CD4-positive, alpha-beta T cell (primary cell): ENCODE measurements at regions of chr12 and their contacts with region 1.

Region 1: GRCh38 chr12:96219698-96220206 is 25.6 kb downstream of the ELK3 start:
- DNase-seq: peak in 2 of 14 experiments; percentile 24 to 45
- ATAC-seq: no peak
- H3K4me3 ChIP-seq: no peak overlapping the region
- H3K4me3 Mint-ChIP-seq: no peak overlapping the region
- H3K27ac ChIP-seq: no peak overlapping the region
- H3K27ac Mint-ChIP-seq: peak overlapping the region; percentile 33
- H3K4me1 ChIP-seq: peaks cover 32% of the 10 kb centered on the region
- H3K4me1 Mint-ChIP-seq: peaks cover 52% of the 10 kb centered on the region
- H3K27me3 ChIP-seq: no peaks in the 10 kb centered on the region
- H3K27me3 Mint-ChIP-seq: no peaks in the 10 kb centered on the region
- CTCF ChIP-seq: no peak

Region 2: GRCh38 chr12:95700316-95700785 is 519.4 kb before region 1 on chr12:
- CTCF ChIA-PET with region 1: no interaction called
- POLR2A ChIA-PET with region 1: no interaction called
- intact Hi-C with region 1: no loop called
- DNase-seq: no peak
- ATAC-seq: no peak
- H3K4me3 ChIP-seq: no peak overlapping the region
- H3K4me3 Mint-ChIP-seq: no peak overlapping the region
- H3K27ac ChIP-seq: no peak overlapping the region
- H3K27ac Mint-ChIP-seq: no peak overlapping the region
- H3K4me1 ChIP-seq: no peaks in the 10 kb centered on the region
- H3K4me1 Mint-ChIP-seq: no peaks in the 10 kb centered on the region
- H3K27me3 ChIP-seq: no peaks in the 10 kb centered on the region
- H3K27me3 Mint-ChIP-seq: peaks cover 9% of the 10 kb centered on the region
- CTCF ChIP-seq: no peak

Region 3: GRCh38 chr12:96061864-96062453 is 157.8 kb before region 1 on chr12:
- CTCF ChIA-PET with region 1: interaction called, 29 read pairs
- POLR2A ChIA-PET with region 1: interaction called, 6 read pairs
- intact Hi-C with region 1: loop called (anchors 1 kb)
- DNase-seq: peak; percentile 64 to 90 (median 70)
- ATAC-seq: peak; percentile 90
- H3K4me3 ChIP-seq: no peak overlapping the region
- H3K4me3 Mint-ChIP-seq: no peak overlapping the region
- H3K27ac ChIP-seq: no peak overlapping the region
- H3K27ac Mint-ChIP-seq: no peak overlapping the region
- H3K4me1 ChIP-seq: peaks cover 18% of the 10 kb centered on the region
- H3K4me1 Mint-ChIP-seq: peaks cover 27% of the 10 kb centered on the region
- H3K27me3 ChIP-seq: no peaks in the 10 kb centered on the region
- H3K27me3 Mint-ChIP-seq: no peaks in the 10 kb centered on the region
- CTCF ChIP-seq: peak; percentile 85

Region 4: GRCh38 chr12:96177013-96177412 is 42.7 kb before region 1 on chr12:
- CTCF ChIA-PET with region 1: interaction called, 18 read pairs
- POLR2A ChIA-PET with region 1: interaction called, 3 read pairs
- intact Hi-C with region 1: loop called in 1 of 2 experiments (anchors 5 kb)
- DNase-seq: peak in 10 of 14 experiments; percentile 2 to 73 (median 32)
- ATAC-seq: peak; percentile 77
- H3K4me3 ChIP-seq: no peak overlapping the region
- H3K4me3 Mint-ChIP-seq: no peak overlapping the region
- H3K27ac ChIP-seq: peak overlapping the region in 1 of 2 donors; percentile 13
- H3K27ac Mint-ChIP-seq: peak overlapping the region; percentile 75
- H3K4me1 ChIP-seq: peaks cover 13% of the 10 kb centered on the region
- H3K4me1 Mint-ChIP-seq: peaks cover 11% of the 10 kb centered on the region
- H3K27me3 ChIP-seq: no peaks in the 10 kb centered on the region
- H3K27me3 Mint-ChIP-seq: no peaks in the 10 kb centered on the region
- CTCF ChIP-seq: no peak

Region 5: GRCh38 chr12:96194971-96195844 is 24.5 kb before region 1 on chr12:
- CTCF ChIA-PET with region 1: interaction called, 83 read pairs
- POLR2A ChIA-PET with region 1: interaction called, 13 read pairs
- intact Hi-C with region 1: no loop called
- DNase-seq: peak; percentile 47 to 95 (median 69)
- ATAC-seq: peak; percentile 72
- H3K4me3 ChIP-seq: peak overlapping the region; percentile 96
- H3K4me3 Mint-ChIP-seq: peak overlapping the region; percentile 96
- H3K27ac ChIP-seq: peak overlapping the region; percentile 85 to 98
- H3K27ac Mint-ChIP-seq: peak overlapping the region; percentile 97
- H3K4me1 ChIP-seq: peaks cover 33% of the 10 kb centered on the region
- H3K4me1 Mint-ChIP-seq: peaks cover 62% of the 10 kb centered on the region
- H3K27me3 ChIP-seq: no peaks in the 10 kb centered on the region
- H3K27me3 Mint-ChIP-seq: no peaks in the 10 kb centered on the region
- CTCF ChIP-seq: no peak

Region 6: DNA sequence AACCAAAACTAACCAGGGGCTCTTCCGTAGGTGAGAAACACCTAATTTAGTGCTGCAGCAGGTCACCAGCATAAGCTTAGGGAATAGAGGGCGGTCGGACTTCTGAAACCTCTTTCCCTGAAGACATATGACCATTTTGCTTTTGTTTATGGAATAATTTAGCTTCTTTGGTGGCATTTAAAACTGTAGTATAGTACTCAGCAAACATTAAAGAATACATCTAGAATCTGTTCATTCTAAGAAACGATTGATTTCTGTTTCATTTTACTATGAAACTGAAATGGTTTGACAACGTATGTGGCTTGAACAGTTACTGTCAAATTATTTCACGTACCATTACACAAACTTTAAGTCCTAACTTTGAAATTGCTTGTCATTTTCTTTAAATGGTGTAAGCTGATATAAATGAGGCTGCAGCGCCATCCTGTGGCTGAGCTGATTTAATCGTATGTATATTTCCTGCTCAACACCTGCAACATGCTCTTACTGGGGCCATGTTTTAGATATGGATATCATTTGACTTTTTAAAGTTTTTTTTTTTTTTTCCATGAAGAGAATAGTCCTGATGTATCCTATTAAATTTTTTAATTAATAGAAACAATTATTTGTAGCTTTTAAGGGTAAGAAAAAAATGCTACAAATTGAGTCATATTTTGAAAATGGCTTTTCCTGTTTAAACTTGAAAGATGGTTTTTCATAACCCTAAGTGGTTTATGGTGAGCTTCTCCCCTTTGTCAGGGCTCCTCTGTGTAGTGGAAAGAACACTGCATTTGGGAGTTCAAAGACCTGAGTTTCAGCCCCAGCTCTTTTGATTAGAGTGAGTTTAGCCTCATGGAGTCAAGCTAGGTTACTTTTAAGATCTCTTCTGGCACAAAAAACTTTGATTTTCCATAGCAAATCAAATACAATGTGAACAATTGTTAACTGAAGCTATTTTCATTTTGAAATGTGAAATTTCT is 297.0 kb after region 1 on chr12:
- CTCF ChIA-PET with region 1: interaction called, 26 read pairs
- POLR2A ChIA-PET with region 1: interaction called, 7 read pairs
- intact Hi-C with region 1: loop called (anchors 1 kb)
- DNase-seq: peak; percentile 77 to 93 (median 86)
- ATAC-seq: peak; percentile 83
- H3K4me3 ChIP-seq: no peak overlapping the region
- H3K4me3 Mint-ChIP-seq: peak overlapping the region; percentile 54
- H3K27ac ChIP-seq: no peak overlapping the region
- H3K27ac Mint-ChIP-seq: peak overlapping the region; percentile 39
- H3K4me1 ChIP-seq: peaks cover 5% of the 10 kb centered on the region
- H3K4me1 Mint-ChIP-seq: peaks cover 14% of the 10 kb centered on the region
- H3K27me3 ChIP-seq: no peaks in the 10 kb centered on the region
- H3K27me3 Mint-ChIP-seq: no peaks in the 10 kb centered on the region
- CTCF ChIP-seq: peak; percentile 68

Region 7: DNA sequence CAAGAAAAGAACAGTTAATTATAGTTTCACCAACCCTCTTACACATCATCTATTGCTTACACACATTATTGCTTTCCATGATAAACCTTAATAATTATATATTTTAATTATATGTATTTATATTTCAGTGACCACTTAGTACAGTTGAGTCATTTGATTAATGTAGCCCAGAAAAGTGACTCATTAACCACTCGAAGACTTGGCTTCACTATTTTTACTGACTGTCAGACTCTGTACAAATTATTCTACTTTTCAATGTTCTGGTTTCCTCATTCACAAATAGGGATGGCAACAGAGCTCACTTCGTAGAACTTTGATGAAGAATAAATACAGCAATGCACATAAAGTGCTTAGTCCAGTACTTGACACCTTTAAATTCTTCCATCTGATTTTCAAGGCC is 367.9 kb after region 1 on chr12:
- CTCF ChIA-PET with region 1: no interaction called
- POLR2A ChIA-PET with region 1: no interaction called
- intact Hi-C with region 1: no loop called
- DNase-seq: no peak
- ATAC-seq: no peak
- H3K4me3 ChIP-seq: no peak overlapping the region
- H3K4me3 Mint-ChIP-seq: no peak overlapping the region
- H3K27ac ChIP-seq: no peak overlapping the region
- H3K27ac Mint-ChIP-seq: no peak overlapping the region
- H3K4me1 ChIP-seq: no peaks in the 10 kb centered on the region
- H3K4me1 Mint-ChIP-seq: no peaks in the 10 kb centered on the region
- H3K27me3 ChIP-seq: no peaks in the 10 kb centered on the region
- H3K27me3 Mint-ChIP-seq: peaks cover 22% of the 10 kb centered on the region
- CTCF ChIP-seq: no peak